ENCODE measurements at regions of chr22 and their contacts with region 1.

Region 1: DNA sequence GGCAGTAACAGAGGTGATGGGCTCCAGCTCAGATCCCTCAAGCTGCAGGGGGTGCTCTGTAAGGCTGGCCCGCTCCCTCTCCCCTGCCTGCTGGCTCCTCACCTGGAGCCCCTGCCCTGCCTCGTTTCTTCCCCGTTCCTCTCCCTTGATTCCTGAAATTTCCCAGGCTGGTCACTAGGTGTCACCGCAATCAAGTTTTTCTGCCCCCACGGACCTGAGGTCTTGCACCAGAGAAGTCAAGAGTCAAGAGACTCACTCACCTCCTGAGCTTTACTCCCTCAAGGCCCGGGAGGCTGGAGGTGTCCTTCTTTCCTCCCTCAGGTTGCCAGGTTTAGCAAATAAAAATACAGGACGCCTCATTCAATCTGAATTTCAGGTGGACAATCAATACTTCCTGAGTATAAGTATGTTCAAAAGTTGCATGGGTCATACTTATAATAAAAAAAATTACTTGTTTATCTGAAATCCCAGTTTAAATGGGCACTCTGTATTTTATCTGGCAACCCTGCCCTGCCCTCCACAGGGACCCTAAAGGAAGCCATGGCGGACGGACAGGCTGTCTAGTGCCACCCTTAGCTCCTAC is 69.2 kb downstream of the SCUBE1 start:
- DNase-seq: peak; percentile 60
- ATAC-seq: peak; percentile 70
- H3K4me3 Mint-ChIP-seq: no peak overlapping the region
- H3K27ac Mint-ChIP-seq: no peak overlapping the region
- H3K4me1 Mint-ChIP-seq: peaks cover 10% of the 10 kb centered on the region
- H3K27me3 Mint-ChIP-seq: peaks cover 2% of the 10 kb centered on the region

Region 2: GRCh38 chr22:43230971-43231723 is 42.8 kb before region 1 on chr22:
- CTCF ChIA-PET with region 1: interaction called, 18 read pairs
- POLR2A ChIA-PET with region 1: no interaction called
- DNase-seq: peak; percentile 76
- ATAC-seq: peak; percentile 66
- H3K4me3 Mint-ChIP-seq: no peak overlapping the region
- H3K27ac Mint-ChIP-seq: peak overlapping the region; percentile 20
- H3K4me1 Mint-ChIP-seq: peaks cover 9% of the 10 kb centered on the region
- H3K27me3 Mint-ChIP-seq: no peaks in the 10 kb centered on the region

Region 3: DNA sequence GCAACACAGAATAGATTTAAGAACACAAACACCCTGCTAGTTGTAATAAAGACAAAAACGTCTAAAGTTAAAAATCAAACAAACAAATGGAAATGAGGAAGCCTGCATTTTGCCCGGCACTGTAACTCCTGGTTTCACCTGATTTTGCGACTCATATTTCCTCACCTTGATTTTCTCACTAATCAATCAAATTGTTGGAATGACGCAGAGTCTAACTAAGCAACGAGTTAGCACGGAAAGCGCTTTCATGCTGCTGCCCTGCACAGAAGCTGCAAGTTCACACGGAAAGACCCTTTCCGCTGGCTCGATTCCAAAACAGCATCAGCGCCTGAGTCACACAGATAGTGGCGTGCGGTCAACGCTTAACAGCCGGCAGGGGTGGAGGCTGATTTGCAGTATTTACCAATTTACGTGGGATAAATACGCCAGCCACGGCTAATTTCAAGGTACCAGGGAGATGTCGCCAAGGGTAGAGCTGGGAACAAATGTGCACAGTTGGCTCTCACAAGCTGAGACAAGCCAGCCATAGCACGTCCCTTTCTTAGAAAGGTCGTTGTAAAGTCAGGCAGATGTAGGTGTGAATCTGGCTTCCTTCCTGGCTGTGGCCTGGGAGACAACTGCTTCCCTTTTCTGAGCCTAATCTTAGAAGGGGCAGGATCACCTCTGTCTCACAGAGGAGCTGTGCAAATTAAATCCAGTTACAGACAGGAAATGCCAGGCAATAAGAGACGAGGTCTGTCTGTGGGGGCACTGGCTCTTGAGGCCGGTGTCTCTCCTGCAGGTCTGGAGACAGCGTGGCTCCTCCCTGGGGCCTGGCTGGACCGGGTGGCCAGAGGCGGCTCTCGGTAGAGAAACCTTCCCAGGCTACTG is 10.1 kb before region 1 on chr22:
- CTCF ChIA-PET with region 1: interaction called, 35 read pairs
- POLR2A ChIA-PET with region 1: interaction called, 11 read pairs
- DNase-seq: peak; percentile 93
- ATAC-seq: peak; percentile 89
- H3K4me3 Mint-ChIP-seq: peak overlapping the region; percentile 72
- H3K27ac Mint-ChIP-seq: peak overlapping the region; percentile 93
- H3K4me1 Mint-ChIP-seq: peaks cover 34% of the 10 kb centered on the region
- H3K27me3 Mint-ChIP-seq: peaks cover 3% of the 10 kb centered on the region

Region 4: GRCh38 chr22:43351966-43352345 is 78.0 kb after region 1 on chr22:
- CTCF ChIA-PET with region 1: interaction called, 171 read pairs
- POLR2A ChIA-PET with region 1: no interaction called
- DNase-seq: no peak
- ATAC-seq: no peak
- H3K4me3 Mint-ChIP-seq: no peak overlapping the region
- H3K27ac Mint-ChIP-seq: no peak overlapping the region
- H3K4me1 Mint-ChIP-seq: no peaks in the 10 kb centered on the region
- H3K27me3 Mint-ChIP-seq: peaks cover 17% of the 10 kb centered on the region

Region 5: DNA sequence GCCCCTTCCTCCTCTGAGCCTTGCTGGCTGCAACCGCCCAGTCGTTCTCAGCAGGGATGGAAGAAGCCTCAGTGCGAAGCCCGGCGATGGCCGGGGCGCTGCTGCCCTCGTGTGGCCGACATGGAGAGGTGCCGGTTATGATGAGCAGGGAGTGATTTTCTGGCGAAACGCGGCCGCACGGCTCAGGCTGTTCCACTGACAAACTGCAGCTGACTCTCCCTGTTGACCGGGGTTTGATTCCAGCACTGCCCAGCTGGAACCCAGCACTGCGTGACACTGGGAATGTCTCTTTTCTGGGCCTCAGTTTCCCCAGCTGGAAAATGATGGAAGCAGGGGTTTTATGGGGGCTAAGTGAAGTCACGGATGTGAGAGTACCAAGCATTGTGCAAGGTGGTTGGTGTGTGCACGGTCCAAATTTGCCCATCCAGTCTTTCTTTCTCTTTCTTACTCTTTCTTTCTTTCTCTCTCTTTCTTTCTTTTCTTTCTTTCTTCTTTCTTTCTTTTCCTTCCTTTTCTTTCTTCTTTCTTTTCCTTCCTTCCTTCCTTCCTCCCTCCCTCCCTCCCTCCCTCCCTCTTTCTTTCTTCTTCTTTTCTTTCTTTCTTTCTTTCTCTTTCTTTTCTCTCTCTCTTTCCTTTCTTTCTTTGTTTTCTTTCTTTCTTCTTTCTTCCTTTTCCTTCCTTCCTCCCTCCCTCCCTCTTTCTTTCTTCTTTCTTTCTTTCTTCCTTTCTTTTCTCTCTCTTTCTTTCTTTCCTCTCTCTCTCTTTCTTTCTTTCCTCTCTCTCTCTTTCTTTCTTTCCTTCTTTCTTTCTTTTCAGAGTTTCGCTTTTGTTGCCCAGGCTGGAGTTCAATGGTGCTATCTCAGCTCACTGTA is 112.0 kb after region 1 on chr22:
- CTCF ChIA-PET with region 1: interaction called, 43 read pairs
- POLR2A ChIA-PET with region 1: interaction called, 3 read pairs
- DNase-seq: peak; percentile 78
- ATAC-seq: peak; percentile 93
- H3K4me3 Mint-ChIP-seq: no peak overlapping the region
- H3K27ac Mint-ChIP-seq: no peak overlapping the region
- H3K4me1 Mint-ChIP-seq: peaks cover 10% of the 10 kb centered on the region
- H3K27me3 Mint-ChIP-seq: peaks cover 18% of the 10 kb centered on the region

Region 6: DNA sequence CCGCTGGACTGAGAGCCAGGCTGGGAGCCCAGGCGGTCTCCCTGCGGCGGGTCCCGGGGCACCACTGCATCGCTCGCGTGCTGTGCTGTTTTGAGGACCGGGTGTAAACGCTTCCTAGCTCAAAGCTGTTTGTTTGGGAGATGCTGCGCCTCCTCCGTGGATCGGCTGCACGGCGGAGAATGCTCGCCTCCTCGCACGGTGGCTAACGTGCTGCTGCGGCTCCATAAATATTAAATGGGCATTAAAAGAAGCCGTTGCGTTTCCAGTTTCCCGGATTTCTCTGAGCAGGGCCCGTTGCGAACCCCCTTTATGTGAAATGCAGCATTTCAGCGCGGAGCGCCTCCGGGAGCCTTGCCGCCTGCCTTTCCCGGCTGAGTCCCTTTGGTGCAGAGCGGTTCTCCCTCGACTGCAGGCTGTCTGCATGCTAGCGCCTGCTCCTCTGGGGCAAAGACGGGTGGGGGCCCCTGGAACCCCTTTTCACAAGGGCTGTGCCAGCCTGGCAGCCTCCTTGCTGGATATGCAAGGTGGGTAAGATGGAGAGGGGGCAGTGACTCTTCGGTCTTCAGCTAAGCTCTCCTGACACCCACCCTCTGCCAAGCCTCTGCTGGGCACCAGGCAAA is 147.2 kb after region 1 on chr22:
- CTCF ChIA-PET with region 1: no interaction called
- POLR2A ChIA-PET with region 1: no interaction called
- DNase-seq: no peak
- ATAC-seq: no peak
- H3K4me3 Mint-ChIP-seq: no peak overlapping the region
- H3K27ac Mint-ChIP-seq: no peak overlapping the region
- H3K4me1 Mint-ChIP-seq: no peaks in the 10 kb centered on the region
- H3K27me3 Mint-ChIP-seq: peaks cover 8% of the 10 kb centered on the region